ENCODE measurements at regions of chr10 and their contacts with region 1.

Region 1: DNA sequence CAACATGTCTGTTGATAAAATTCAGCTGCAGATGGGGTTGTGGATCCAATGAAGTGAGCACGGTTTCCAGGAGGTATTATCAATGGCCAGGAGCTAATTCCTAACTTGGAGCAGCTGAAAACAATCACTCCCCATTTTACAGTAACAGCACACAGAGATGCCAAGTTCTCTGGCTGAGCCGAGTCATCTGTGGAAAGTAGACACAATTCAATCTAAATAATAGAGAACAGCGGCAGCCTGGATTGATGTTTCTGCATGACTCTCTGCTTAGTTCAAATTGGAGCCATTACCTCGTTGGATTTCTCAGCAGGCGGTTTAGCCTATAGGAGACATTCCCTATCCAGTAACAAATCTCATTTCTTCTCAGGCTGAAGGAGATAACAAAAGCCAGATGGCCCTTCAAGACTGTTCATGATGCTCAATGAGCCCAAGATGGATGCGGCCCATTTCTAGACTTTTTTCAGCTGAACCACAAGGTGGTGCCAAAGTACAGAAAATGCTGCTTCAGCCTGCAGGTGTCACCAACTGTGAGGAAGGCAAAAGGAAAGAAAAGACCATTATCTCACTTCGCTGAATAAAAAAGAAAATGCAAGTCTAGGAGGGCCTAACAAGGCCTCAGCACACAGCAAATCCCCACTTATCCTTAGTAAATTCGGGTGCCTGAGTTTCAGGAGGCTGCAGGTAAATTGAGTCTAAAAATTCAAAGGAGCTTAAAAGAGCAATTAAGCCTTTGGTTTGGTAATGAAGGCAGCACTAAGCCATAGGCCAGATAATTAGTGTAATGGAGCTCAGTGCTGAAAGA is 83.7 kb downstream of the SLC16A9 start:
- DNase-seq: peak; percentile 47
- ATAC-seq: peak; percentile 92
- H3K4me3 ChIP-seq: no peak overlapping the region
- H3K27ac ChIP-seq: no peak overlapping the region
- H3K4me1 ChIP-seq: no peaks in the 10 kb centered on the region
- H3K27me3 ChIP-seq: no peaks in the 10 kb centered on the region
- CTCF ChIP-seq: peak; percentile 86

Region 2: DNA sequence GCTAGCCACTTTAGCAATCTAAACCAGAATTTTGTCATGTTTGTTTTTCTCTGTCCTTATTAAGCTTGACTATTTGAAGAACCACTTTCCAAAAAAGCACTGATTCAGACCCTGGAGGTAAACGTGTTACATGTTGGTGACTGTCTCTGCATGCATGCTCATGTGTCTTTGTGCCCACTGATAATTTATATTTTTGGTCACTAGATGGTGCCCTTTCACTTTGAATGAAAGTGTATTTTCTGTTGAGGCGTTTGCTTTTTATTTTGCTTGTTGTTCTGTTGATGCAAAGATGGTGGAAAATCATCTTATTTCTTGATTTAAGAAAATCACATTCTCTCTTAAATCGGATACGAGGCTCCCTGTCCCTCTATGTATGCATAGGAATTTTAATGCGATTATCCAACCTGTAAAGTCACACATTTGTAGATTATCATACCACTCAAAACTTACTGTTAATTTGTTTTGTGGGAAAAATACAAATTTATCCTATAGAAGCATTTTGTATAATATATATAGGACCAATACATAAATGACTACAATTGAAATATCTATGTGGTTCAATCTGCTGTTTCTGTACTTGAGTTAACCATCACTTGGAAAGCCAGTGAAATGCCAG is 843.9 kb before region 1 on chr10:
- CTCF ChIA-PET with region 1: no interaction called
- POLR2A ChIA-PET with region 1: no interaction called
- in situ Hi-C with region 1: no loop called
- intact Hi-C with region 1: loop called (anchors 1 kb)
- DNase-seq: peak; percentile 52
- ATAC-seq: peak; percentile 70; the same call in 1 of the 2 replicates
- H3K4me3 ChIP-seq: no peak overlapping the region
- H3K27ac ChIP-seq: no peak overlapping the region
- H3K4me1 ChIP-seq: no peaks in the 10 kb centered on the region
- H3K27me3 ChIP-seq: no peaks in the 10 kb centered on the region
- CTCF ChIP-seq: peak; percentile 69; the same call in 1 of the 2 replicates

Region 3: GRCh38 chr10:59240582-59241183 is 385.2 kb before region 1 on chr10:
- CTCF ChIA-PET with region 1: no interaction called
- POLR2A ChIA-PET with region 1: no interaction called
- in situ Hi-C with region 1: no loop called
- intact Hi-C with region 1: loop called (anchors 1 kb)
- DNase-seq: no peak
- ATAC-seq: no peak
- H3K4me3 ChIP-seq: no peak overlapping the region
- H3K27ac ChIP-seq: no peak overlapping the region
- H3K4me1 ChIP-seq: no peaks in the 10 kb centered on the region
- H3K27me3 ChIP-seq: no peaks in the 10 kb centered on the region
- CTCF ChIP-seq: peak; percentile 65; the same call in 1 of the 2 replicates

Region 4: GRCh38 chr10:59470570-59470969 is 155.4 kb before region 1 on chr10:
- CTCF ChIA-PET with region 1: no interaction called
- POLR2A ChIA-PET with region 1: no interaction called
- in situ Hi-C with region 1: no loop called
- intact Hi-C with region 1: no loop called
- DNase-seq: no peak
- ATAC-seq: no peak
- H3K4me3 ChIP-seq: no peak overlapping the region
- H3K27ac ChIP-seq: no peak overlapping the region
- H3K4me1 ChIP-seq: no peaks in the 10 kb centered on the region
- H3K27me3 ChIP-seq: no peaks in the 10 kb centered on the region
- CTCF ChIP-seq: no peak

Region 5: GRCh38 chr10:59817773-59818172 is 191.9 kb after region 1 on chr10:
- CTCF ChIA-PET with region 1: interaction called, 14 read pairs
- POLR2A ChIA-PET with region 1: no interaction called
- in situ Hi-C with region 1: no loop called
- intact Hi-C with region 1: no loop called
- DNase-seq: no peak
- ATAC-seq: no peak
- H3K4me3 ChIP-seq: no peak overlapping the region
- H3K27ac ChIP-seq: no peak overlapping the region
- H3K4me1 ChIP-seq: no peaks in the 10 kb centered on the region
- H3K27me3 ChIP-seq: no peaks in the 10 kb centered on the region
- CTCF ChIP-seq: no peak

Region 6: GRCh38 chr10:59906417-59907202 is 280.7 kb after region 1 on chr10 and contains the start of gene CCDC6:
- CTCF ChIA-PET with region 1: interaction called, 3 read pairs
- POLR2A ChIA-PET with region 1: no interaction called
- in situ Hi-C with region 1: no loop called
- intact Hi-C with region 1: loop called (anchors 5 kb)
- DNase-seq: peak; percentile 71
- ATAC-seq: peak; percentile 95
- H3K4me3 ChIP-seq: peak within 1 kb of the TSS; percentile 91 to 98
- H3K27ac ChIP-seq: peak within 1 kb of the TSS; percentile 98
- H3K4me1 ChIP-seq: peaks cover 35% of the 10 kb centered on the region
- H3K27me3 ChIP-seq: no peaks in the 10 kb centered on the region
- CTCF ChIP-seq: peak; percentile 96
- total RNA-seq, gene CCDC6: 48.7 TPM

Region 7: GRCh38 chr10:60048091-60048501 is 422.2 kb after region 1 on chr10:
- CTCF ChIA-PET with region 1: no interaction called
- POLR2A ChIA-PET with region 1: no interaction called
- in situ Hi-C with region 1: no loop called
- intact Hi-C with region 1: loop called (anchors 5 kb)
- DNase-seq: no peak
- ATAC-seq: 0 out of 2 replicates have a peak, but pooled peaks have one; percentile 56
- H3K4me3 ChIP-seq: no peak overlapping the region
- H3K27ac ChIP-seq: no peak overlapping the region
- H3K4me1 ChIP-seq: no peaks in the 10 kb centered on the region
- H3K27me3 ChIP-seq: peaks cover 18% of the 10 kb centered on the region
- CTCF ChIP-seq: peak; percentile 50

Region 8: GRCh38 chr10:60434418-60435046 is 808.6 kb after region 1 on chr10:
- CTCF ChIA-PET with region 1: no interaction called
- POLR2A ChIA-PET with region 1: no interaction called
- in situ Hi-C with region 1: no loop called
- intact Hi-C with region 1: loop called (anchors 5 kb)
- DNase-seq: peak; percentile 46
- ATAC-seq: peak; percentile 81; the same call in 1 of the 2 replicates
- H3K4me3 ChIP-seq: no peak overlapping the region
- H3K27ac ChIP-seq: no peak overlapping the region
- H3K4me1 ChIP-seq: no peaks in the 10 kb centered on the region
- H3K27me3 ChIP-seq: no peaks in the 10 kb centered on the region
- CTCF ChIP-seq: peak; percentile 75; the same call in 1 of the 2 replicates

Measured in Panc1 (cell line).